Activated CD4-positive, alpha-beta T cell treated with anti-CD3 and anti-CD28 coated beads for 36 hours (primary cell): ENCODE measurements at regions of chr9 and their contacts with region 1.

Region 1: DNA sequence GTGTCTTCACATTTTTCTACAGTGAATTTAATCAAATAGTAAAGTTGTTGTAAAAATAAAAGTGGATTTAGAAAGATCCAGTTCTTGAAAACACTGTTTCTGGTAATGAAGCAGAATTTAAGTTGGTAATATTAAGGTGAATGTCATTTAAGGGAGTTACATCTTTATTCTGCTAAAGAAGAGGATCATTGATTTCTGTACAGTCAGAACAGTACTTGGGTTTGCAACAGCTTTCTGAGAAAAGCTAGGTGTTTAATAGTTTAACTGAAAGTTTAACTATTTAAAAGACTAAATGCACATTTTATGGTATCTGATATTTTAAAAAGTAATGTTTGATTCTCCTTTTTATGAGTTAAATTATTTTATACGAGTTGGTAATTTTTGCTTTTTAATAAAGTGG is 60.4 kb downstream of the MTAP start:
- DNase-seq: no peak
- ATAC-seq: no peak
- H3K4me3 Mint-ChIP-seq: no peak overlapping the region
- H3K27ac Mint-ChIP-seq: no peak overlapping the region
- H3K4me1 Mint-ChIP-seq: peaks cover 5% of the 10 kb centered on the region
- H3K27me3 Mint-ChIP-seq: no peaks in the 10 kb centered on the region

Region 2: GRCh38 chr9:21919377-21920362 is 56.8 kb after region 1 on chr9:
- CTCF ChIA-PET with region 1: no interaction called
- POLR2A ChIA-PET with region 1: no interaction called
- intact Hi-C with region 1: no loop called
- DNase-seq: peak; percentile 16
- ATAC-seq: peak; percentile 85
- H3K4me3 Mint-ChIP-seq: no peak overlapping the region
- H3K27ac Mint-ChIP-seq: peak overlapping the region; percentile 48
- H3K4me1 Mint-ChIP-seq: peaks cover 15% of the 10 kb centered on the region
- H3K27me3 Mint-ChIP-seq: no peaks in the 10 kb centered on the region

Region 3: DNA sequence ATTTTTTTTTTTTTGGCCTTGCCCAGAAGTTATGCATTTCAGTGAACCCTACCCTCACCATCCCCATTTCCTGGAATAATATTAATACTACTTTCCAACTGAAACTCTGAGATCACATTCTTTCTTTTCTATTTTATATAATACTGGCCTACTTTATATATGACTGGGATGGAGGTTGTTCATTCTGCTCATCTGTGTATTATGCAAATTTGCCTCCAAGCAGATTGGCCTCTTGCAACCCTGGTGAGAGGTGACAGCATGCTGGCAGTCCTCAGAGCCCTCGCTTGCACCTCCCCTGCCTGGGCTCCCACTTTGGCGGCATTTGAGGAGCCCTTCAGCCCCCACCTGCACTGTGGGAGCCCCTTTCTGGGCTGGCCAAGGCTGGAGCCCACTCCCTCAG is 96.0 kb after region 1 on chr9:
- CTCF ChIA-PET with region 1: no interaction called
- POLR2A ChIA-PET with region 1: no interaction called
- intact Hi-C with region 1: loop called in 1 of 2 experiments (anchors 10 kb)
- DNase-seq: no peak
- ATAC-seq: peak; percentile 81
- H3K4me3 Mint-ChIP-seq: no peak overlapping the region
- H3K27ac Mint-ChIP-seq: no peak overlapping the region
- H3K4me1 Mint-ChIP-seq: no peaks in the 10 kb centered on the region
- H3K27me3 Mint-ChIP-seq: peaks cover 35% of the 10 kb centered on the region

Region 4: GRCh38 chr9:22124263-22125011 is 261.6 kb after region 1 on chr9:
- CTCF ChIA-PET with region 1: no interaction called
- POLR2A ChIA-PET with region 1: no interaction called
- intact Hi-C with region 1: no loop called
- DNase-seq: no peak
- ATAC-seq: no peak
- H3K4me3 Mint-ChIP-seq: no peak overlapping the region
- H3K27ac Mint-ChIP-seq: no peak overlapping the region
- H3K4me1 Mint-ChIP-seq: no peaks in the 10 kb centered on the region
- H3K27me3 Mint-ChIP-seq: peaks cover 23% of the 10 kb centered on the region